Activated naive CD4-positive, alpha-beta T cell treated with anti-CD3 and anti-CD28 coated beads for 36 hours (primary cell): ENCODE measurements at regions of chr9 and their contacts with region 1.

Region 1: DNA sequence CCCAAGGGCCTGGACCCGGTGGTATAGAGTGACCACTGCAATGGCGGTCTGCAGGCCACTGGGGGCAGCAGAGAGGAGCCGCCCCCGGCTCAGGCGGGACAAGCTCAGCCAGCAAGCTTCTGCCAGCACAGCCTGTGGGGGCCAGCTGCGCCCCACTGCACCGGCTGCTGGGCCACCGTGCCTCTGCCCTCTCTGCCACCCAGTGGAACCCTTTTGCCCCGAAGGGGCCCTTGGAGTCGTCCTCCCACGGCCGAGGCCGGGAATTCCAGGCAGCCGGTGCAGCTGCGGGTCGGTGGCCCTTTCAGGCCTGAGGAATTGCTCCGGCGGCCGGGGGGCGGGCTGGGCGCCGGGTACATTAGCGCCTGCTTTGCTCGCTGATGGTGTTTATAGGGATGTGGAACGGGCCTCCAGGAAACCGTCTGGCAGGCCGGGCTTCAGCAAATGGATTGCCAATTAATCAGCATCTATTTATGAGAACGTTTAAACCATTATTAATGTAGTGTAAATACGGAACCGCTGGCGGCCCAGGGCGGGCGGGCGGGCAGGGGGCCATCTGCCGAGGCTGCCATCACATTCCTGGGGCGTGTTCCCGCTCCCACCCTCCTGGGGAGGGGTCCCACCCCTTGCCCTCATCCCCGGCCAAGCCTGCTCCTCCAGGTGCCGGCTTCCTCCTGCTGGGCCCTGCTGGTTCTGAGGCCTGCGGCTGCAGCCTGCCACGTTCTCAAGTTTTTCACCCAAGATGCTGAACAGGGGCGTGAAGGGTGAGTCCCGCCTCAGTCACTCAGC is 127.4 kb downstream of the BARX1 start:
- DNase-seq: peak; percentile 46
- H3K4me3 Mint-ChIP-seq: no peak overlapping the region
- H3K27ac Mint-ChIP-seq: no peak overlapping the region
- H3K4me1 Mint-ChIP-seq: peaks cover 8% of the 10 kb centered on the region
- H3K27me3 Mint-ChIP-seq: peaks cover 40% of the 10 kb centered on the region

Region 2: GRCh38 chr9:92820964-92821363 is 1006.8 kb before region 1 on chr9:
- CTCF ChIA-PET with region 1: no interaction called
- intact Hi-C with region 1: no loop called
- DNase-seq: no peak
- H3K4me3 Mint-ChIP-seq: no peak overlapping the region
- H3K27ac Mint-ChIP-seq: no peak overlapping the region
- H3K4me1 Mint-ChIP-seq: peaks cover 6% of the 10 kb centered on the region
- H3K27me3 Mint-ChIP-seq: peaks cover 4% of the 10 kb centered on the region

Region 3: GRCh38 chr9:93682232-93682968 is 145.3 kb before region 1 on chr9:
- CTCF ChIA-PET with region 1: interaction called, 10 read pairs
- intact Hi-C with region 1: loop called (anchors 5 kb)
- DNase-seq: peak; percentile 79
- H3K4me3 Mint-ChIP-seq: no peak overlapping the region
- H3K27ac Mint-ChIP-seq: no peak overlapping the region
- H3K4me1 Mint-ChIP-seq: no peaks in the 10 kb centered on the region
- H3K27me3 Mint-ChIP-seq: no peaks in the 10 kb centered on the region

Region 4: GRCh38 chr9:93786204-93786603 is 41.5 kb before region 1 on chr9:
- CTCF ChIA-PET with region 1: no interaction called
- intact Hi-C with region 1: no loop called
- DNase-seq: no peak
- H3K4me3 Mint-ChIP-seq: no peak overlapping the region
- H3K27ac Mint-ChIP-seq: no peak overlapping the region
- H3K4me1 Mint-ChIP-seq: no peaks in the 10 kb centered on the region
- H3K27me3 Mint-ChIP-seq: peaks cover 33% of the 10 kb centered on the region

Region 5: DNA sequence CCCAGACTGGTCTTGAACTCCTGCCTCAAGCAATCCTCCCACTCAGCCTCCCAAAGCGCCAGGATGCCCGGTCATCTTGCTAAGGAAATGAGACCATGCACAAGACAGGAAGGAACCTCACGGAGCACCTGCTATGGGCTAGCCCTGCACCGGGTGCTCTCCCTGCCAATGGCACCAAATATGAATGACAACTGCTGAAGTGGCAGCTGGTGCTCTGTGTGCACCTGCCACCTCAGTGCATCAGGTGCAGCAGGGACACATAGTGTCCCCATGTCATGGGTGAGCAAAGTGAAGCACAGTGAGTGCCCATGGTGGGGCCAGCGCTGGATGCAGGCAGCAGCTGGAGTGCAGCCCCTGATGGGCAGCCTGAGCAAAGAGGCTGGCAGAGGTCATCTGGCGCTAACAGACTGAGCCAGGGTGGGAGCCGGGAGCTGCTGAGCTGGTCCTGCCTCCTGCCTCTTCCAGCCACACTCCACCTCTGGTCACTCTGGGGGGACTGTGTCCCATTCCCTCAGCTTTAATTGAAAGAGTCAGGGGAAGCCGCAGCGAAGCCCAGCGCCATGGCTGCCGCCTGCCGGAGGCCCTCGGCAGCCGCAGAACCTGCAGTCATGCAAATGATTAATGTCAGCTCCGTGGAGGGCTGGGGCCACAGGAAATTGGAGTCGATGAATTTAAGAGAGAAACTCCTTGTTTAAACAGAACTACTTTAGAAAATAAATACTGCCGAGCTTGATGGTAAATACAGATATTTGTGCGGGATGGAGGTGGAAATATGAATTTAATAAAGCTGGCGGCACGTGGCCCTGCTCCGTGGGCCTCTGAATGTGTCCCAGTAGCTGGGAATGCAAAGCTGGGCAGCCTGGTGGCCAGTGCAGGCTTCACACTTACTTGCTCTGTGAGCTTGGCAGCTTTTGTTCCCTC is 81.1 kb after region 1 on chr9:
- CTCF ChIA-PET with region 1: interaction called, 4 read pairs
- intact Hi-C with region 1: loop called (anchors 2 kb)
- DNase-seq: peak; percentile 23
- H3K4me3 Mint-ChIP-seq: no peak overlapping the region
- H3K27ac Mint-ChIP-seq: no peak overlapping the region
- H3K4me1 Mint-ChIP-seq: peaks cover 5% of the 10 kb centered on the region
- H3K27me3 Mint-ChIP-seq: no peaks in the 10 kb centered on the region

Region 6: GRCh38 chr9:93962561-93963440 is 135.1 kb after region 1 on chr9:
- CTCF ChIA-PET with region 1: interaction called, 13 read pairs
- intact Hi-C with region 1: loop called (anchors 10 kb)
- DNase-seq: peak; percentile 92
- H3K4me3 Mint-ChIP-seq: no peak overlapping the region
- H3K27ac Mint-ChIP-seq: no peak overlapping the region
- H3K4me1 Mint-ChIP-seq: peaks cover 35% of the 10 kb centered on the region
- H3K27me3 Mint-ChIP-seq: peaks cover 40% of the 10 kb centered on the region

Region 7: DNA sequence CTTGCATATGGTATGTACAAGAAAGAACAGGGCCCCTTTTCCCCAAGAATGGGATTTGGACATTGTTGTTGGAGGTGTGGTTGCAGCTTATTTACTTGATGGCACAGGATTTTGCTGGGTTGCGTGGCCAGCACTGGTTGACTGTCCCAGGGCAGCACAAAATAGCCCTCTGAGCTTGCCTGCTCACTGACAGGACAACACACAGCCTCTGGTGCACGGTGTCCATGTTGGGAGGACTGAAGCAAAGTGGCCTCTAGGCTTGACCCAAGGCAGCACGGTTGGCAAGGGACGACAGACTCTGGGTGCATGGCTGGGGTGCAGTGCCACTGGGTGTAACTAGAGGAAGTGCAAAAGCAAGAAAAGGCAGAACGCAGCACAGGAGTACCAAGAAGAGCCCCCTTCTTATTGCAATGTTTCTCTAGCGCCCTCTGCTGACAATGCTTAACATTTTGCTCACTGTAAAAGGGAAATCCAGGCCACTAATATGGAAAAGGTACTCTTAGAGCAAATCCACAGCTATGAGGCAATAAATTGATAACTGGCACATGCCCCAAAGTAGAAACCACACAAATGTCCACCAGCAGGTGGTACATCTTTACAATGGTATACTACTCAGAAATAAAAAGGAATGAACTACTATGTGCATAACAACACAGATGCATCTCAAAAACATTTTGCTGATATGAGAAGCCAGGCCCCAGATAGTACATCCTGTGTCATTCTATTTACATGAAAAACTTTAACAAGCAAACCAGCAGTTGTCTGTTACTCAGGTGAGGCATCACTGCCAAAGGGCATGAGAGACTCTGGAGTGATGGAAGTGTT is 174.8 kb after region 1 on chr9:
- CTCF ChIA-PET with region 1: interaction called, 3 read pairs
- intact Hi-C with region 1: loop called (anchors 10 kb)
- DNase-seq: peak; percentile 60
- H3K4me3 Mint-ChIP-seq: no peak overlapping the region
- H3K27ac Mint-ChIP-seq: no peak overlapping the region
- H3K4me1 Mint-ChIP-seq: no peaks in the 10 kb centered on the region
- H3K27me3 Mint-ChIP-seq: no peaks in the 10 kb centered on the region

Region 8: DNA sequence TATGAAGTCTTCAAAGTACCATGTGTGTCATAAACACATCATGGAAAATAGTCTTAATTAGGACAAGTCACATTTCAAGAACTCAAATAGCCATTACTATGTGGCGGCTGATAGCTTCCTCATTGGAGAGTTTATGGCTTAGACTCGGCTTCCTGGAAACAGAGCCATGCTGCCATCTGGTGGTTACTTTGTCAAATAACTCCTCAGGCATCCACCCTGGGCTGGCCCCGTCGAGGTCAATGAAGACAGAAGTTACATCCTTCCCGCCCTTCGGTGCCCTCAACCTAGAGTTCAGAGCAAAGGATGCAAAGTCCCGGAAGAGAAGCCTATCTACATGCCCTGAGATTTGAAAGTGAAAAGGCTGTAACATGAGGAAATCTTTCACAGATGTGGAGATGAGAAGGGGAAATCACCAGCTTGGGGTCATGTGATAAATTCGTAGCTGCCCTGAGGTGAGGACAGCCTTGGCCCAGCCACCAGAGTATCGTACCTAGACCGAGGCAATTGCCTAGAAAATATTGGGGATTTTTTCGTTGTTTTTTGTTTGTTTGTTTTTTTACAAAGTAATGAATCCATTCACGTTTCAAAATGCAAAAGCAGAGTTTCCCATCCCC is 385.9 kb after region 1 on chr9:
- CTCF ChIA-PET with region 1: no interaction called
- intact Hi-C with region 1: loop called (anchors 5 kb)
- DNase-seq: peak; percentile 83
- H3K4me3 Mint-ChIP-seq: no peak overlapping the region
- H3K27ac Mint-ChIP-seq: no peak overlapping the region
- H3K4me1 Mint-ChIP-seq: peaks cover 3% of the 10 kb centered on the region
- H3K27me3 Mint-ChIP-seq: peaks cover 27% of the 10 kb centered on the region